ENCODE measurements at regions of chr16 and their contacts with region 1.

Region 1: GRCh38 chr16:46883690-46884512 is at the start of gene GPT2:
- DNase-seq: peak; percentile 88
- H3K4me3 Mint-ChIP-seq: peak within 1 kb of the TSS; percentile 73
- H3K27ac Mint-ChIP-seq: peak within 1 kb of the TSS; percentile 72
- H3K4me1 Mint-ChIP-seq: peaks cover 18% of the 10 kb centered on the region
- H3K27me3 Mint-ChIP-seq: peaks cover 5% of the 10 kb centered on the region
- total RNA-seq, gene GPT2: 20.2 to 23.1 TPM

Region 2: DNA sequence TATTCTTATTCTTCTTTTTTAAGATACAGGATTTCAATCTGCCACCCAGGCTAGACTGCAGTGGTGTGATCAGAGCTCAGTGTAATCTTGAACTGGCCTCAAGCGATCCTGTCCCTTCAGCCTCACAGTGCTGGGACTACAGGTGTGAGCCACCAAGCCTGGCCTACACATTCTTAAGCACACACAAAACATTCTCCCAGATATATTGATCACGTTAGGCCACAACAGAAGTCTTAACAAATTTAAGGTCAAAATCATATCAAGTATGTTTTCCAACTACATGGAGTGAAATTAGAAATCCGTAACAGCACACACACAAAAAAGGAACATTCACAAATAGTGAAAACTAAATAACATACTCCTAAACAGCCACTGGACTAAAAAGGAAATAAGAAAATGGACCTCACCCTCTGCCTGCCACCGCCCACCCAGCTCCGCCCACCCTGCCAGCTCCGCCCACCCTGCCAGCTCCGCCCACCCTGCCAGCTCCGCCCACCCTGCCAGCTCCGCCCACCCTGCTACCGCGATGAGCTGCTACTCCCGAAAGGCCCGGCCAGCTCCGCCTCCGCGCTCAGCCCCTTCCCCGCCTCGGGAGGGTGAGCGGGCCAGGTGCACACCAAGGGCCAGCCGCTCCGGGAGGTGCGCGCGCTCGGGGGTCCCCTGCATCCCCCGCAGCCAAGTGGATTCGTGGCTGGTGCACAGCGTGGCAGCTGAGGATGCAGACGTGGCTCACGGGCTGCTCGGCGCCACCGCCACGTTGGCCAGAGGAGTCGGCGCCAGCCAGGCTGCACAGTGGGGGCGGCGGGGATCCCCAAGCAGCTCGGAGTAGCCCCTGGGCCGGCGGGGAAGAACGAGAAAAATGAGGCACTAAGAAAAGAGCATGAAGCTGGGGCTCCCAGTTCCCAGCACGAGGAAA is 94.1 kb before region 1 on chr16:
- CTCF ChIA-PET with region 1: no interaction called
- POLR2A ChIA-PET with region 1: no interaction called
- intact Hi-C with region 1: loop called (anchors 5 kb)
- DNase-seq: peak; percentile 88
- H3K4me3 Mint-ChIP-seq: peak overlapping the region; percentile 69
- H3K27ac Mint-ChIP-seq: peak overlapping the region; percentile 7
- H3K4me1 Mint-ChIP-seq: peaks cover 22% of the 10 kb centered on the region
- H3K27me3 Mint-ChIP-seq: no peaks in the 10 kb centered on the region

Region 3: GRCh38 chr16:46862555-46863447 is 21.1 kb before region 1 on chr16:
- CTCF ChIA-PET with region 1: interaction called, 8 read pairs
- POLR2A ChIA-PET with region 1: interaction called, 3 read pairs
- intact Hi-C with region 1: loop called (anchors 1 kb)
- DNase-seq: peak; percentile 32
- H3K4me3 Mint-ChIP-seq: no peak overlapping the region
- H3K27ac Mint-ChIP-seq: peak overlapping the region; percentile 3
- H3K4me1 Mint-ChIP-seq: peaks cover 34% of the 10 kb centered on the region
- H3K27me3 Mint-ChIP-seq: no peaks in the 10 kb centered on the region